Aorta (tissue), 5 donors: ENCODE measurements at regions of chr14 and their contacts with region 1.

Region 1: GRCh38 chr14:55707365-55707804 is 127.4 kb downstream of the KTN1 start:
- DNase-seq: no peak
- ATAC-seq: peak; percentile 61
- H3K4me3 ChIP-seq: no peak overlapping the region
- H3K27ac ChIP-seq: no peak overlapping the region
- H3K4me1 ChIP-seq: peaks cover 0 to 3% of the 10 kb centered on the region in 2 donors
- H3K27me3 ChIP-seq: no peaks in the 10 kb centered on the region

Region 2: DNA sequence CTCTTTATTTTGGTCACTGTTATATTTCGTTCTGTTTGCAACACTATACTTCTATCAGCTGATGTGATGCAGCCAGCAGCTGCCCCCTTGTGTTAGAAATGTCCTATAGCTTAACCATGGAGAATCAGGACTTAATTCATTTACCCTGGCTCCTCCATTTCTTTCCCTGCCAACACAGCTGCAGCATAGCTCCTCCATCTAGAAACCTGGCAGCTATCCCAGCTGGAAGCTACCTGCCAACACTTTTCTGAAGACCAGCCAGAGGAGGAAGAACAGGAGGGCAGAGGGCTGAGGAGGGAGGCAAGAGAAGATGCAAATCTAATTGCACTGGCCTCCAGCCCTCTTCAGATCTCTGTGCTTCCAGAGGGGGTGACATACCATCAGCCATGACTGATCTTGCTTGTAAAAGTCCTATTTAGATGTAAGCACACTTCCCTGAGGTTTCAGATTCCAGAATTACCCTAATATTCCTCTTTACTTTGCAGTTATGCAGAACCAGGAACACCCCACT is 715.4 kb after region 1 on chr14:
- intact Hi-C with region 1: loop called in 1 of 2 experiments (anchors 5 kb)
- DNase-seq: peak in 1 of 2 donors; percentile 62
- ATAC-seq: peak; percentile 86
- H3K4me3 ChIP-seq: no peak overlapping the region
- H3K27ac ChIP-seq: no peak overlapping the region
- H3K4me1 ChIP-seq: no peaks in the 10 kb centered on the region
- H3K27me3 ChIP-seq: no peaks in the 10 kb centered on the region